MCF 10A (cell line): ENCODE measurements at regions of chr2 and their contacts with region 1.

Region 1: GRCh38 chr2:68190991-68191731 is 33.5 kb downstream of the PNO1 start:
- DNase-seq: peak; percentile 82
- H3K4me3 Mint-ChIP-seq: no peak overlapping the region
- H3K27ac Mint-ChIP-seq: peak overlapping the region; percentile 81
- H3K4me1 Mint-ChIP-seq: peaks cover 43% of the 10 kb centered on the region
- H3K27me3 Mint-ChIP-seq: no peaks in the 10 kb centered on the region
- CTCF ChIP-seq: no peak

Region 2: GRCh38 chr2:68083346-68083745 is 107.8 kb before region 1 on chr2:
- CTCF ChIA-PET with region 1: no interaction called
- POLR2A ChIA-PET with region 1: no interaction called
- intact Hi-C with region 1: no loop called
- DNase-seq: no peak
- H3K4me3 Mint-ChIP-seq: no peak overlapping the region
- H3K27ac Mint-ChIP-seq: no peak overlapping the region
- H3K4me1 Mint-ChIP-seq: no peaks in the 10 kb centered on the region
- H3K27me3 Mint-ChIP-seq: no peaks in the 10 kb centered on the region
- CTCF ChIP-seq: no peak

Region 3: DNA sequence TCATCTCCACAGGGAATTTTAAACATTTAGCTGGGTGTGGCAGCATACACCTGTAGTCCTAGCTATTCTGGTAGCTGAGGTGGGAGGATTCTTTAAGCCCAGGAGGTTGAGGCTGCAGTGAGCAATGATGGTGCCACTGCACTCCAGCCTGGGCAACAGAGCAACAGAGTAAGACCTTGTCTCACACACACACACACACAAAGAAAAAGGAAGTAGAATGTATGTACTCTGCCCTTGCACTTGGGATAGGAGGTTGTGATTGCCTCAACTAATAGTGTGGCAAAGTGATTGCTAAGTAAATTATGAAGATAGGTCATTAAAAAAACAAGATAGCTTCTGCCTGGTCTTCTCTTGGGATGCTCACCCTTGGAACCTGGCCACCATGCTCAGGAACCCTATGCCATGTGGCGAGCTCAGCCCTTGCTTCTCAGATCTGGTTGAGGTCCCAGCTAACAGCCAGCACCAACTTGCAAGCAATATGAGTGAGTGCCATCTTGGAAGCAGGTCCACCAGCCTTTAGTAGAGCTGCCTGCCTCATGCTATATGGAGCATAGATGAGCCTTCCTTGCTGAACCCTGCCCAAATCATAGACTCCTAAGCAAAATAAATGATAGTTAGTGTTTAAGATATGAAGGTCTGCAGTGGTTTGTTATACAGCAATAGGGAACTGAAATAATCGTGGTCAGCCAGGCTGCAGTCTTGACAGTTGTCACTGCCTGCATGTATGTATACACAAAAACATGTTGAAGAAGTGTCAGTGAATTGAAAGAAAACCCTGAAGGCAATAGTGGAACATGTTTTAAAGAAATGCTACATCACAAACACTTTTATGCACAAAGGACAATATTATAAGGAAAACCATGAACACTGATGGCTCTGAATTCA is 63.6 kb before region 1 on chr2:
- CTCF ChIA-PET with region 1: interaction called, 3 read pairs
- POLR2A ChIA-PET with region 1: no interaction called
- intact Hi-C with region 1: loop called (anchors 2 kb)
- DNase-seq: no peak
- H3K4me3 Mint-ChIP-seq: no peak overlapping the region
- H3K27ac Mint-ChIP-seq: no peak overlapping the region
- H3K4me1 Mint-ChIP-seq: peaks cover under 1% of the 10 kb centered on the region
- H3K27me3 Mint-ChIP-seq: no peaks in the 10 kb centered on the region
- CTCF ChIP-seq: no peak

Region 4: DNA sequence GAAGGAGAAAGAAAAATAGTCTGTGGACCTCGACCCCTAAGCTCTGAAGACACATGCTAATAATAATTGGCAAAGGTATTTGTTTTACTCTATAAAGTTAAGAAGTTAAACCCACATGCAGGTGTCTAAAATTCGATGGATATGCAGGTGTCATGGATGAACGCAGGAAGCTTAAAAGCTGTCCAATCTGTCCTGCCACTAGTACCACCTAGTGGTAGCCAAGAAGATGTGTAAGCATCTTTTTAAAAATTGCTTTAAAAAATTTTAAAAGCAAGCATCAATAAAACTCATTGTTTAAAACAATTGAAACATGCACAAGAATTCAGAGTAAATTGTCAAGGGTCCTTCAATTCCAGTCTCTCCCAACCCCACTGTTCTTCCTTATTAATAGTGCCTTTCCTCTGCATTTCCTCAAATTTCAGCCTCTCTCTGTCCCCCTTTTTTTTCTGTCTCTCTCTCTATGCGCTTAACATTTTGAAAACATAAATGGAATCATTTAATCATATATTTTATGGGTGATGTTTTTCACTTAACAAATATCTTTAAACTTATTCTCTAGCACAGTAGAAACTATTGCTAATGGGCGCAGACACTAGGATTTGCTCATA is 91.8 kb after region 1 on chr2:
- CTCF ChIA-PET with region 1: interaction called, 13 read pairs
- POLR2A ChIA-PET with region 1: interaction called, 7 read pairs
- intact Hi-C with region 1: no loop called
- DNase-seq: peak; percentile 60
- H3K4me3 Mint-ChIP-seq: no peak overlapping the region
- H3K27ac Mint-ChIP-seq: no peak overlapping the region
- H3K4me1 Mint-ChIP-seq: peaks cover 29% of the 10 kb centered on the region
- H3K27me3 Mint-ChIP-seq: no peaks in the 10 kb centered on the region
- CTCF ChIP-seq: peak; percentile 76